ENCODE measurements at regions of chr14 and their contacts with region 1.

Region 1: DNA sequence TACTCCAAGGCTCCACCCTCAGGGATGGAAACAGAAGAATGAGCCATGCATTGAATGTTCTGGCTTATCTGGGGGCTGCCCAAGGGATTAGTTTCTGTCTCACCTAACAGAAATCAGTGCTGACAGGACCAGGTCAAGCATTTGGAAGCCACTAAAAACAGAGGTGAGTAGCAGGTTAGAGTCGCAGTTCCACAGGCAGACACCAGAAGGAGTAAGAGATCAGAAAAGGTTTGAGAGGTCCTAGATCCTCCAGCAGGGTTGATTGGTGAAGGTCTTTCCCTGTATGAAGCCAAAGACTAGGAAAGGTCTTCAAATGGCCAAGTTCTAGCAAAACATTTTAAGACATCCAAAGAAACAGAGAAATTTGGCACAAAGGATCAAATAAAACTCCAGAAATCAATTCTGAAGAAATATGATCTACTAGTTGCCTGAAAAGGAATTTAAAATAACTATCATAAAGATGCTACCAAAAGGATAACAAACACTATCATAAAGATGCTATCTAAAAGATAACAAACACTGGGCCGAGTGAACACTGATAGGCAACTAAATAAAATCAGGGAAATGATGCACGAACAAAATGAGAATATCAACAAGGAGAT is 19.5 kb upstream of the TTC9 start:
- DNase-seq: peak; percentile 62
- ATAC-seq: peak; percentile 84
- H3K4me3 Mint-ChIP-seq: no peak overlapping the region
- H3K27ac Mint-ChIP-seq: no peak overlapping the region
- H3K4me1 Mint-ChIP-seq: no peaks in the 10 kb centered on the region
- H3K27me3 Mint-ChIP-seq: peaks cover 8% of the 10 kb centered on the region

Region 2: GRCh38 chr14:70685474-70686197 is 63.4 kb after region 1 on chr14:
- CTCF ChIA-PET with region 1: no interaction called
- DNase-seq: no peak
- ATAC-seq: no peak
- H3K4me3 Mint-ChIP-seq: no peak overlapping the region
- H3K27ac Mint-ChIP-seq: no peak overlapping the region
- H3K4me1 Mint-ChIP-seq: no peaks in the 10 kb centered on the region
- H3K27me3 Mint-ChIP-seq: no peaks in the 10 kb centered on the region

Region 3: GRCh38 chr14:70714055-70714621 is 91.9 kb after region 1 on chr14:
- CTCF ChIA-PET with region 1: interaction called, 44 read pairs
- DNase-seq: peak; percentile 45
- ATAC-seq: peak; percentile 39
- H3K4me3 Mint-ChIP-seq: no peak overlapping the region
- H3K27ac Mint-ChIP-seq: no peak overlapping the region
- H3K4me1 Mint-ChIP-seq: peaks cover 7% of the 10 kb centered on the region
- H3K27me3 Mint-ChIP-seq: peaks cover 15% of the 10 kb centered on the region